Posterior vena cava (tissue), 2 donors: ENCODE measurements at regions of chr16 and their contacts with region 1.

Region 1: DNA sequence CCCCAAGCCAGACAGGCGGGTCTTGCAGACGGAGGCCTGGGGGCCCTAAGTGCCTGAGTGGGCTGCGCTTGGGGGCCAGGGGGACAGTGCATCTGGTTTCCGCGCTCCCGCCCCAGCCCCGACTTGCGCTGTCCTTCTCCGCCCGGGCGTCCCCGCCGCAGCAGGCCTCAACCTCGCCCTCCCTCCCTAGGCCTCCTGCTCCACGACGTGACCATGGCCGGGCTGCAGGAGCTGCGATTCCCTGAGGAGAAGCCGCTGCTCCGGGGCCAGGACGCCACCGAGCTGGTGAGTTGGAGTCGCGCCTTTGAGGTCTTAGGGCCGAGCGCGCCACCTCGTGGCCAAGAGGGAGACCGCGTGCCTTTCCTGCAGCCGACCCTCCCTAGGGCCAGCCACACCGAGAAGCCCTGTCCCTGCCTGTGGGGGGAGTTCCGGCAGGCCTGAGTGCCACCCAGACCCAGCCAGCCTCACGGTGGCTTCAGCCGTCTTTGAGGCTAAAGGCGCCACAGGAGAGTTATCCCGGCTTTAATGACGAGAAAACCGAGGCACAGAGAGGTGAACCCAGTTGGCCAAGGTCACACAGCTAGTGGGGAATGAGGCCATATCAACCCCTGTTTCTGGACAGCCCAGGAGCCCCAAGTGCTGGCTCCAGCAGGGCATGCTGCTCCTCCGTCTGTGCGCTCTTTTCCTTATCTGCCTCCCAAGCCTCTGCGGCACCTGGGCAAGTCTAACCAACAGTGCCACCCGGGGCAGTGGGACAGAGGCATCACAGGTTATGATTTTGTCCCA is 12.2 kb upstream of the NDRG4 start:
- DNase-seq: peak; percentile 95

Region 2: GRCh38 chr16:58336332-58337089 is 151.2 kb before region 1 on chr16:
- intact Hi-C with region 1: loop called (anchors 2 to 5 kb)
- DNase-seq: peak; percentile 93

Region 3: GRCh38 chr16:58503863-58504688 is 16.3 kb after region 1 on chr16:
- intact Hi-C with region 1: loop called in 1 of 2 experiments (anchors 1 kb)
- DNase-seq: peak; percentile 72

Region 4: DNA sequence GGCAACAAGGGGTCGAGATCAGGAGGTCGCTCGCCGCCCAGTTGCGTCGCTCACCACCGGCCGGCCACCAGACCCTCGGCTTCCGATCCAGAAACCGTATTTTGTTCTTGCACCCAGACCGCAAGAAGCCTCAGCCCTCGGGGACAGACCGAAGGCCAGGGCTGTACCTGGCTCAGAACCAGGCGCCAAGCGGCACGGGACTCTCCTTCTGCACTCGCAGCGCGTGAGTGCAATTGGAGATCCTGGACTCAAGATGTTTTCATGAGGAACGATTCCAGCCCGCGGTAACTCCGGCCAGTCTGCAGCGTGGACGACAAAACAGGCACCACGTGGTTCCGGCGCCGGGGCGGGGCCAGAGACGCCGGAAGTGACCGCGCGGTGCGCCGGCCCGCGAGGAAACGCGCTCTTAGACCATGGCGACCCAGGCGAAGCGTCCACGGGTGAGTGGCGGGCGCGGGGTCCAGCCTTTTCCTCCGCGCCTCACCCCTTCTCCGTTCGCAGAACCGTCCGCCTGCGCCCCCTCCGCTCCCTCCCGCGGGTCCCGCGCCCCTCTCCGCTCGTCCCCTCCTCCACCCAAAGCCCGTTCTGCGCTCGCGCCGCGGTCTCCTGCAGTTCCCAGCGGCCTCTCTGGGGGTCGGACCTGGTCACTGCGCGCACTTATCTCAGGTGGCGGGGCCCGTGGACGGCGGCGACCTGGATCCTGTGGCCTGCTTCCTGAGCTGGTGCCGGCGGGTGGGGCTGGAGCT is 27.5 kb after region 1 on chr16 and contains the start of gene SETD6:
- intact Hi-C with region 1: no loop called
- DNase-seq: peak; percentile 96
- total RNA-seq, gene SETD6: 9.9 to 13.5 TPM